PC-3 (cell line): ENCODE measurements at regions of chr14 and their contacts with region 1.

Region 1: DNA sequence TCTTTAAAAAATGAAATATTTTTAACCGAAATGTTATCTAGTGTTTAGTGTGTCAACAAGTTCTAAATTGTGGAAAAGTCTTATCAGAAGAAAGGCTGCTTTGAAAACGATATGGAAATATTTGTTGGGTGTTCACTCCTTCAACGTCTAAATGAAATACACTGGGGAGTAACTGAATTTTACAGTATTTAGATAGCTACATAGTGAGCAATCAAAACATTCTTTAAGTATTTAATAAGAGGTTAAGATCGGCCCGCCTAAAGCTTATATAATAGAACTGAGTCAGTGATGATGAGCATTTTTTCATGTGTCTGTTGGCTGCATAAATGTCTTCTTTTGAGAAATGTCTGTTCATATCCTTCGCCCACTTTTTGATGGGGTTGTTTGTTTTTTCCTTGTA is 228.3 kb downstream of the RAD51B start:
- DNase-seq: peak; percentile 82
- ATAC-seq: peak; percentile 100
- H3K4me3 ChIP-seq: peak overlapping the region; percentile 33
- H3K27ac ChIP-seq: peak overlapping the region; percentile 21
- H3K4me1 ChIP-seq: peaks cover 9% of the 10 kb centered on the region
- H3K27me3 ChIP-seq: no peaks in the 10 kb centered on the region
- CTCF ChIP-seq: no peak

Region 2: DNA sequence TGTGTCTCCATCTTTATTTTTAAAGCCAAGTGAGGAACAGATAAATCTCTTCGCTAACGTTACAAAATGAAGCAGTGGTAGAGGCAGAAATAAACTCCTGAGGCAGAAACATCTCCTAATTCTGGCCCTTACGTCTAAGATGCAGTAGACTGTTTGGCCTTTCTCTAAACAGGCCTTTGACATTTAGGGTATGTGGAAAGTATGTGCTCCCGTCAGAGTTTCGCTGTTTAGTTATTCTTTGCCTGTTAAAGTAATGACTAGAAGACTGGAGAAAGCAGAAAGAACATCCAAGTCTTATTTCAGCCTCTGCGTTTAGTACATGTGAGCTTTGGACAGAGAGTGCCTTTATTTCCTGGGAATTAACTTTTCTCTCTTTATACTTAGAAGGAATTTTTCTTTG is 11.7 kb before region 1 on chr14:
- CTCF ChIA-PET with region 1: no interaction called
- POLR2A ChIA-PET with region 1: no interaction called
- intact Hi-C with region 1: no loop called
- DNase-seq: no peak
- ATAC-seq: no peak
- H3K4me3 ChIP-seq: no peak overlapping the region
- H3K27ac ChIP-seq: no peak overlapping the region
- H3K4me1 ChIP-seq: peaks cover 8% of the 10 kb centered on the region; the same call in 1 of the 2 replicates
- H3K27me3 ChIP-seq: no peaks in the 10 kb centered on the region
- CTCF ChIP-seq: no peak

Region 3: GRCh38 chr14:68084256-68084655 is 36.4 kb after region 1 on chr14:
- CTCF ChIA-PET with region 1: no interaction called
- POLR2A ChIA-PET with region 1: no interaction called
- intact Hi-C with region 1: no loop called
- DNase-seq: peak; percentile 37
- ATAC-seq: peak; percentile 48
- H3K4me3 ChIP-seq: no peak overlapping the region
- H3K27ac ChIP-seq: no peak overlapping the region
- H3K4me1 ChIP-seq: no peaks in the 10 kb centered on the region
- H3K27me3 ChIP-seq: no peaks in the 10 kb centered on the region
- CTCF ChIP-seq: peak; percentile 71

Region 4: DNA sequence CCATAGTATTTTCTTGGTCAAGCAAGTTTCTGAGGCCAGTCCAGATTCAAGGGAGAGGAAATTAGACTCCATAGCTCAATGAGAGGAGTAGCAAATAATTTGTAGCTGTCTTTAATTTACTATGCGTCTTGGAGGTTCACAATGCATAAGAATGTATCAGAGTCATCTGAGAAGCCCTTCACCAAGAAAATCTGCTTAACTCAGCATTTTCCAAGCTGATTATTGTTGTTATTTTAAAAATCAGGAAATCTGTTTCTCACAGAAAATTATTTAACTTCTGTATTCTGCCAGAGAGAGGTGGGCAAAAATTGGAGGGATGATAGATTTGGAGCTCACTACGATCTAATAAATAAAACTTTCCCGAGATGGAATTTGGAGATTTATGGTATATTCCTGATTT is 1903.4 kb after region 1 on chr14:
- CTCF ChIA-PET with region 1: no interaction called
- POLR2A ChIA-PET with region 1: interaction called, 10 read pairs
- intact Hi-C with region 1: no loop called
- DNase-seq: no peak
- ATAC-seq: no peak
- H3K4me3 ChIP-seq: no peak overlapping the region
- H3K27ac ChIP-seq: no peak overlapping the region
- H3K4me1 ChIP-seq: no peaks in the 10 kb centered on the region
- H3K27me3 ChIP-seq: peaks cover 93% of the 10 kb centered on the region
- CTCF ChIP-seq: no peak